Head of caudate nucleus (tissue), 42 donors: ENCODE measurements at regions of chr16 and their contacts with region 1.

Region 1: DNA sequence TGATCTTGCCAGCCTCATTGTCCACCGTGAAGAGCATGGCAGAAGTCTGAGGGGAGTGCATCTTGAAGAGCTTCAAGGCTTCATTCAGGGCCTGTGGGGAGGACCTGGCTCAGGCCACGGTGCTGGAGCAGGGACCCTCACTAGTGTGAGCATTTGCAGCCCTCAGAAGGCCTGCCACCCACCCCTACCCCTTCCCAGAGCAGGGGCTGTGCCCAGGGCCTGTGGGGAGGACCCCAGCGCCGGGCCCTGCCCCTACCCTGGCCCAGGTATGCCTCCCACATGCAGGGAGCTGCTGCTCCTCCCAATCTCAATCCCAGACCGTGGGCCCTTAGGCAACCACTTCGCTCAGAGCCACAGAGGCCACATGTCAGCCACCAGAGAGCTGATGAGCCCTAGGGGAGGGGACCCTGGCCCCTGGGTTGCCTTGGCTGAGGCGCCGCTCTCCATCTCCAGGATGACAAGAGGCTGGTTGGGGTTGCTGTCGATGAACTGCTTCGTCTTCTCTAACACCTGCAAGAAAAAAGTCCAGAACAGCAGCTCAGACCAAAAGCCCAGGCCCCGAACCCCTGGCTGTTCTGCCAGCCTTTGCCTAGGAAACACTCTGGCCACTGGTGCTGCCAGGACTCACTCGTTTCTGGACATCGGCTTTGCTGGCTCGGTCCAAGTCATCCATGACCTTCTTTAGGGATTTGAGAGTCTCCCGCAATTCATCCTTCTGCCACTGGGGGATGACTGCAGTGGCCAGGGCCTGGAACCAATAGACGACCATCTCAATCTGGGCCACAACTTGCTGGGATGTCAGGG is 1.8 kb upstream of the EXOSC6 start:
- DNase-seq: peak in 7 of 42 donors; percentile 11 to 57 (median 19)

Region 2: GRCh38 chr16:69917739-69918138 is 335.8 kb before region 1 on chr16:
- intact Hi-C with region 1: no loop called
- DNase-seq: no peak

Region 3: GRCh38 chr16:70289229-70290098 is 36.0 kb after region 1 on chr16 and contains the start of gene AARS1:
- intact Hi-C with region 1: loop called (anchors 2 kb)
- DNase-seq: peak; percentile 94 to 99 (median 98)

Region 4: DNA sequence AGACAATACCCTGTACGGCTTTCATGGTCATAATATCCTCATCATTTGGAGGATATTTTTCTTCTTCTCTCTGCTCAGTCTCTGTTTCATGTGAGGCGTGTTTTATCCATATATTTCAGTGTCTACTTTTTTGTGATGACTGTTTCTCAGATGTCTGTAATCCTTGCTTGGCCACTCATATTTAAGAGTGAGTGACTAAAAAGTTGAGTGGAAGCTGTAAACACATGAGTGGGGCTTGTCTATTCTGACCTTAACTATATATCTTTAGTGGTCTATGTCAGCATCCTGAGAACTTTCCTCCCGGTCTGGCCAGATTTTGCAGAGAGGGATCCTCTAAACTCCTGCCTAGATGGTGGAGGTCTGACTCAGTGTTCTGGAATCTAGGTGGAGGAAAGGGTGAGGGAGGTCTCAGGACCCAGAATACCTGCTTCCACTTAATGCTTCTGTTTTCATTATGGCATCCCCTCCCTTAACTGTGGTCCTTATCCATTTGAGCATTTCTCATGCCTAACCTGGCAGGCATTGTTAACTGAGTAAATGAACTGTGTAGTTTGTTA is 51.5 kb after region 1 on chr16:
- intact Hi-C with region 1: no loop called
- DNase-seq: no peak

Region 5: GRCh38 chr16:70553645-70554044 is 300.2 kb after region 1 on chr16:
- intact Hi-C with region 1: no loop called
- DNase-seq: no peak